SK-N-SH (cell line): ENCODE measurements at regions of chr19 and their contacts with region 1.

Region 1: GRCh38 chr19:46537136-46538097 is 41.8 kb upstream of the PNMA8B start:
- DNase-seq: peak; percentile 70
- H3K4me3 ChIP-seq: peak overlapping the region in 1 of 2 experiments; percentile 11; a peak in 1 of 4 replicates
- H3K27ac ChIP-seq: no peak overlapping the region
- H3K4me1 ChIP-seq: peaks cover 0 to 9% of the 10 kb centered on the region in 2 experiments; a peak in 1 of 4 replicates
- H3K27me3 ChIP-seq: no peaks in the 10 kb centered on the region
- CTCF ChIP-seq: peak; percentile 89
- EP300 ChIP-seq: no peak
- RAD21 ChIP-seq: 0 out of 2 replicates have a peak, but pooled peaks have one; percentile 9

Region 2: DNA sequence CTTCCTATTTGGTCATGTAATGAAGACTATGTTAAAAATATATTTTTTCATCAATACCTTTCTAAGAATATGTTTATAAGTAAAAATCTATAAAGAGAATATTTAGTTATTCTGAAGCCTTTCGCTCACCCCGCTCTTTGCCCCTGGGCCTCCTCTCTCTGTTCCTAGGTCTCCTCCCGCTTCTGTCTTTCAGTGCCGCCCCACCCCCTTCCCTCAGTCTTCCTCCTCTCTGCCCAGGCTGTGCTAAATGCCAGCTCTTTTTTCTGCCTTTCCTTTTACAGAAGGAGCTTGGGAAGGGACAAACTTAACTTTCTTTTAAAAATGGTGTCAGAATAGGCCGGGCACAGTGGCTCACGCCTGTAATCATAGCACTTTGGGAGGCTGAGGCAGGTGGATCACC is 217.8 kb before region 1 on chr19:
- CTCF ChIA-PET with region 1: no interaction called
- POLR2A ChIA-PET with region 1: no interaction called
- DNase-seq: no peak
- H3K4me3 ChIP-seq: no peak overlapping the region
- H3K27ac ChIP-seq: no peak overlapping the region
- H3K4me1 ChIP-seq: no peaks in the 10 kb centered on the region
- H3K27me3 ChIP-seq: no peaks in the 10 kb centered on the region
- CTCF ChIP-seq: no peak
- EP300 ChIP-seq: no peak
- RAD21 ChIP-seq: no peak

Region 3: GRCh38 chr19:46426506-46427162 is 110.8 kb before region 1 on chr19:
- CTCF ChIA-PET with region 1: no interaction called
- POLR2A ChIA-PET with region 1: no interaction called
- DNase-seq: peak; percentile 94
- H3K4me3 ChIP-seq: peak overlapping the region; percentile 62 to 66
- H3K27ac ChIP-seq: peak overlapping the region in 1 of 2 experiments; percentile 12; a peak in 1 of 4 replicates
- H3K4me1 ChIP-seq: peaks cover 0 to 19% of the 10 kb centered on the region in 2 experiments; a peak in 2 of 4 replicates
- H3K27me3 ChIP-seq: no peaks in the 10 kb centered on the region
- CTCF ChIP-seq: no peak
- EP300 ChIP-seq: no peak
- RAD21 ChIP-seq: no peak

Region 4: GRCh38 chr19:46495787-46496101 is 41.7 kb before region 1 on chr19 and contains the start of gene PNMA8B:
- CTCF ChIA-PET with region 1: no interaction called
- POLR2A ChIA-PET with region 1: no interaction called
- DNase-seq: peak; percentile 99
- H3K4me3 ChIP-seq: peak within 1 kb of the TSS; percentile 57 to 59
- H3K27ac ChIP-seq: peak within 1 kb of the TSS in 1 of 2 experiments; percentile 59; a peak in 1 of 4 replicates
- H3K4me1 ChIP-seq: peaks cover 0 to 16% of the 10 kb centered on the region in 2 experiments; a peak in 1 of 4 replicates
- H3K27me3 ChIP-seq: no peaks in the 10 kb centered on the region
- CTCF ChIP-seq: no peak
- EP300 ChIP-seq: no peak
- RAD21 ChIP-seq: no peak
- polyA plus RNA-seq, gene PNMA8B: 0.63 and 0.92 TPM in 2 replicates

Region 5: GRCh38 chr19:46520616-46521015 is 16.8 kb before region 1 on chr19:
- CTCF ChIA-PET with region 1: interaction called, 59 read pairs
- POLR2A ChIA-PET with region 1: no interaction called
- DNase-seq: no peak
- H3K4me3 ChIP-seq: no peak overlapping the region
- H3K27ac ChIP-seq: no peak overlapping the region
- H3K4me1 ChIP-seq: no peaks in the 10 kb centered on the region
- H3K27me3 ChIP-seq: no peaks in the 10 kb centered on the region; the same call in 1 of the 2 replicates
- CTCF ChIP-seq: no peak
- EP300 ChIP-seq: no peak
- RAD21 ChIP-seq: no peak

Region 6: GRCh38 chr19:46551164-46551563 is 13.7 kb after region 1 on chr19:
- CTCF ChIA-PET with region 1: interaction called, 28 read pairs
- POLR2A ChIA-PET with region 1: no interaction called
- DNase-seq: no peak
- H3K4me3 ChIP-seq: no peak overlapping the region
- H3K27ac ChIP-seq: no peak overlapping the region
- H3K4me1 ChIP-seq: no peaks in the 10 kb centered on the region; a peak in 1 of 4 replicates
- H3K27me3 ChIP-seq: no peaks in the 10 kb centered on the region
- CTCF ChIP-seq: no peak
- EP300 ChIP-seq: no peak
- RAD21 ChIP-seq: no peak